ENCODE measurements at regions of chr1 and their contacts with region 1.

Region 1: GRCh38 chr1:17502326-17502778 is 37.1 kb upstream of the ARHGEF10L start:
- DNase-seq: peak; percentile 92 to 97 (median 95)
- H3K4me3 ChIP-seq: no peak overlapping the region
- H3K27ac ChIP-seq: peak overlapping the region in 3 of 5 donors; percentile 2 to 66 (median 23)
- H3K4me1 ChIP-seq: peaks cover 0 to 7% of the 10 kb centered on the region in 2 donors
- H3K27me3 ChIP-seq: no peaks in the 10 kb centered on the region
- CTCF ChIP-seq: peak; percentile 88 to 97 (median 94)
- POLR2A ChIP-seq: peak; percentile 24 to 30

Region 2: DNA sequence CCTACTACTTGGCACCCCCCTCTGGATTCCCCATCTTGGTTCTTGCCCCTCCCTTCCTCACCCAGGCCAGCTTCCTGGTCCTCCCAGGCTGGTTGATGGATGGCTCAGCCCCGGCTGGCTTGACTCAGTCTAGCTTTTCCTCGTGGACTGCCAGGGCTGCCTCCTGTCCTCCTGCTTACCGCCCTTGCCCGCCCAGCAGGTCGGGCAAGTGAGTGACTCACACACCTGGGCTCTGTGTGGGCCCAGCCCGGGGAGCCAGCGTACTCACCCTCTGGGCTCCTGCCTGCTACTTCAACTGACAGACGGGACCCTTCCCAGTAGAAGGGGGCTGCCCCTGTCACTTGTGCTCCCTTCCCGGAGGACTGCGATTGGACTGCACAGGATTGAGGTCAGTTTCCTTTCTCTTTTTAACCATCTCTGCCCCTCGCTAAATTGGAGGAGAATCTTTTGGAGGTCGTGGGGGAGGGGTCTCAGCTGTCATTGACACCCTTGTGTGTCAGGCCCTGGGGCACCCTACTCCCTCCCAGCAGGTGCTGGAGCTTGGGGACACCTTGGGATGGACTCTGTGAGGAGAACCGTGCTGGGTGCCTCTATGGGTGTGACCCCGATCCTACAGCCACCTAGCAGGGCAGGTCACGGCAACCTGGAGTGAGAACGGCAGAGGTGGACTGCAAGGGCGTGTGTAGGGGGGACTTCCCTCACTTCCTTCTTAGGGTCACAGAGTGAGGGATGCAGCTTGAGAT is 17.9 kb after region 1 on chr1:
- intact Hi-C with region 1: no loop called
- DNase-seq: peak in 1 of 7 donors; percentile 34
- H3K4me3 ChIP-seq: no peak overlapping the region
- H3K27ac ChIP-seq: no peak overlapping the region
- H3K4me1 ChIP-seq: peaks cover 0 to 2% of the 10 kb centered on the region in 2 donors
- H3K27me3 ChIP-seq: no peaks in the 10 kb centered on the region
- CTCF ChIP-seq: no peak
- POLR2A ChIP-seq: no peak

Region 3: DNA sequence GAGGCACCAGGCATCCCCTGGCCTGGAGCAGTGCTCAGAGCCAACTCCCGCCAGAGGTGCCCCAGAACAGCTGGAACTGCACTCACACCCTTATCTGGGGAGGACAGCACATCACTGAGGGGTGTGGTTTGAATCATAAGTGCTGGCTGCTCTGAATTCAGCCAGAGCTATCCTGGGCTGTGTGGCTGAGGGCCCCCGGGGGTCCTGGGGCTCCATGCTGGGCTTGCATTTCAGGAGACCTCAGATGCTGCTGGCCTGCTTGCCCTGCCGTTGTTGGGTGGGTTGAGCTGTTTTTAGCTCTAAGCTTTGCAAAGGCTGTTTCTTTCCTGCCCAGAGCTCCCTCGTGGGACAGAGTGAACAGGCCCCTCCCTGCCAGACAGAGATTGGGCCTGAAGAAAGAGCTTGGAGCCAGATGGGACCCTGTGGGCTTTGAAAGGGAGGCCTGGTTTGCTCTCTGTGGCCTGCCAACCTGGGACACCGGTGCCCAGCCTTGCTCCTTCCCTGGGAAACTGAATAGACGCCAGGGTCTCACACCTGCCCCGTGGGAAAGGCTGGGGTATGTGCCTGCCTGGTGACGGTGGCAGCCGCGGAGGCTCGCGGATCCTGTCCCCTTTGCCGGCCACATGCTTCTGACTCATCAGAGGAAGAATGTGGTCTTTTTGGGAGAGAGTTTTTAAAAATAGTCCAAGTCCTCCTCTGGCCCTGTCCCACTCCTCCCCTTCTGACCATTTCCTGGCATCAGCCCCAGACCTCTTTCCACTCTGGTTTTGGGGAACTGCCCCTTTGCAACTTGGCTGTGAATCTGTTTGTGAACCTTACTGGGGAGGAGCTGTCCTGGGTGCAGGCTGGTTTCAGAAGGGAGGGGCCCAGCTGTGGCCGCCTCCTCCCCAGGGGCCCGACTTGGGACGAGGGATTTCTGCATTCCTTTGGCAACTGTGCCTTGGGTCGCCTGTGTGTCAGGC is 67.1 kb after region 1 on chr1:
- intact Hi-C with region 1: no loop called
- DNase-seq: peak; percentile 80 to 97 (median 94)
- H3K4me3 ChIP-seq: peak overlapping the region in 1 of 4 donors; percentile 35
- H3K27ac ChIP-seq: peak overlapping the region; percentile 86 to 99 (median 97)
- H3K4me1 ChIP-seq: peaks cover 27 to 38% of the 10 kb centered on the region in 2 donors
- H3K27me3 ChIP-seq: no peaks in the 10 kb centered on the region
- CTCF ChIP-seq: no peak
- POLR2A ChIP-seq: peak in 1 of 2 donors; percentile 58

Region 4: DNA sequence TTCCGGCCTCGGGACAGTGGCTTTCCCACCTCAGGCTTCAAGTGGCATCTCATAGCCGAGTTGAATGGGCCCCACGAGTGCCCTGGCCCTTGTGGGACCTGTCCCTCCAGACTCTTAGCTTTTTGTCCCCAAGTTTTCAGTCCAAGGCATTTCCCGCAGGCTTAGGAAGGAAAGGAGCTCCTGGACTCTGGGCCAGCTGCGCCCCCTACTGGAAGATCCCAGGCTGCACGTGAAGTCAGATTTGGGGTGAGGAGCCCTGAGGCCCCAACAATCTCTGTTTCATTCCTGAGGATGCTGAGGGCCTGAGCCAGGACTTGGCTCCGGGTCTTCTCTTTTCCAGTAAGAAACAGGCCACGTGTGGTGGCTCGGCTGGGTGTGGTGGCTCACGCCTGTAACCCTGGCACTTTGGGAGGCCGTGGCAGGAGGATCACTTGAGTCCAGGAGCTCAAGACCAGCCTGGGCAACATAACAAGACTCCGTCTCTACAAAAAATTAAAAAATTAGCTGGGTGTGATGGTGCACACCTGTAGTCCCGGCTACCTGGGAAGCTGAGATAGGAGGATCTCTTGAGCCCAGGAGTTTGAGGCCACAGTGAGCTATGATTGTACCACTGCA is 104.6 kb after region 1 on chr1:
- intact Hi-C with region 1: loop called (anchors 2 to 5 kb)
- DNase-seq: peak; percentile 70 to 90 (median 83)
- H3K4me3 ChIP-seq: no peak overlapping the region
- H3K27ac ChIP-seq: peak overlapping the region in 1 of 5 donors; percentile 50
- H3K4me1 ChIP-seq: peaks cover 0 to 16% of the 10 kb centered on the region in 2 donors
- H3K27me3 ChIP-seq: no peaks in the 10 kb centered on the region
- CTCF ChIP-seq: peak; percentile 82 to 95 (median 94)
- POLR2A ChIP-seq: no peak

Measured in adrenal gland (tissue), 19 donors.